ENCODE measurements at regions of chr10 and their contacts with region 1.

Region 1: GRCh38 chr10:123885406-123886170 is 6.0 kb downstream of the CPXM2 start:
- DNase-seq: peak in 1 of 2 donors; percentile 92
- H3K4me3 ChIP-seq: no peak overlapping the region
- H3K27ac ChIP-seq: peak overlapping the region; percentile 89 to 97
- H3K4me1 ChIP-seq: peaks cover 30 to 77% of the 10 kb centered on the region in 2 donors
- H3K27me3 ChIP-seq: no peaks in the 10 kb centered on the region
- CTCF ChIP-seq: no peak

Region 2: DNA sequence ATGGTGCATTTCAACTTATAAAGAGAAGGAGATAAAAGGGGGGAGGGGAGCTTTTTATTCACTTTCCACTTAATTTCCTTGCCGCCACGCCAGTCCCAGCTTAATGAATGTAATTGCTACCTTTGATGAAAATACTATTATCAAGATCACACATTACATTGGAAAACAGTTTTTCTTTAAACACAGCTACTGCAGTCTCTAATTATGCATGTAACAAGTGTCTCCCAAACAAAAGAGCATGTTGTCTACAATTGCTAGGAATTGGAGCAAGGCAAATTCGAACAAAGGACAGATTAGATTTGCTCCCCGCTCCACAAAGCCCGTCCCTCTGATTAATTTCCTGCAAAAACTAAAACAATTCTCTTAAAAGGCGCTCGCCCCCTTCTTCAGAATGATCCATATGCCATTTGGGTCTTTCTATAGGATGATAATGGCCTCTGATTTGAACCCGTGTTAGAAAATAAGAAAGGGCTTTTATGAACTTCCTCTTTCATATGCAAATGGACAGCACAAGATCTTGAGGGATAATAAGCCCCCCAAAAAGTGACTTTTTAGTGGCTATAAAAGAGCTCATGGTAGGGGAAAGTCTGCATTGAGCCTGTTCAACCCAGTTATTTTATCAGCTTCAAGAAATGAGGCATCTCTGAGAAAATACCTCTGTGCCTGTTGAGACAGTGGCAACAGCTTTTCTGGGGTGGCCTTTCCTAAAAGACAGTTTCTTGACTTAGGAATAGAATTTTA is 816.2 kb before region 1 on chr10:
- intact Hi-C with region 1: no loop called
- DNase-seq: no peak
- H3K4me3 ChIP-seq: no peak overlapping the region
- H3K27ac ChIP-seq: no peak overlapping the region
- H3K4me1 ChIP-seq: no peaks in the 10 kb centered on the region
- H3K27me3 ChIP-seq: no peaks in the 10 kb centered on the region
- CTCF ChIP-seq: no peak

Region 3: DNA sequence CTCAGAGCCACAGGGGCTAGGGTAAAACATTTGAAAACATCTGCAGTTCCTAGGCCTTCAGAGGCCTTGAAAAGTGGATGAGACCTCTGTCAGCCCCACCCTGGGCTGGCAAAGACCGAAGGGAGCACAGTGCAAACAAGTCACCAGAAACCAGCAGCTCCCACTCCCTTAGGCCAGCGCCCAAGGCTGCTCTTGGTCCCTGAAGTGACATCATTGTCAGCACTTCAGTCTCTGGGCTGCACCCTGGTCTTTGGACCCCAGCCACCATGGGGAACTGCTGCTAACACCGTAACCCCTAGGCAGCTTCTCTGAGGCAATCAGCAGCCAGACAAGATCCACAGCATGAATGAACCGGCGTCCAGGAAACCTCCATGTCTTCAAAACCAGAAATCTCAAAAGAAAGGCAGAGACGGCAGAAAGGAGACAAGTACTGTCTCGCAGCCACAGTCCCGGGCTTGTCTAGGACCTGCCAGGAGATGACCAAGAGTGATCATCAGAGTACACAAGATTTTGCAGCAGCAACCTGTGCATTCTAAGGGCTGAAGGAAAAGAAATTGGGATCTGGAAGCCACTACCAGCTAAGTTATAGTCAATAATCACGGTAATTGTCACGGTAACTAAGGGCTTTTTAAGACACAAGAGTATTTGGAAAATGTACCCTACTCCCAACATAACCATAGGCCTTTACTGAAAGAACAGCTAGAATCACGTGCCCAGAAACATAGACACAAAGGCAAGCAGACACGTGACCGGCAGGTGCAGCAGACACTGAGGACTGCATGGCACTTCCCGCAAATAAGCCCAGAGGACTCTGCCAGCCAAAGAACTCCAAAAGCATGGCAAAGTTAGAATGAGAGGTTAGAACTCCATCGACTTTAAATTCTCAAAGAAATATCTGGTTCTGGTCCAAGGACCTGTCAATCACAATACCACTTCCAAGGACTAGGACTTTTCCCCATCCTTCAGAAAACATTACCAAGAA is 17.3 kb before region 1 on chr10:
- intact Hi-C with region 1: loop called (anchors 1 kb)
- DNase-seq: peak in 1 of 2 donors; percentile 63
- H3K4me3 ChIP-seq: no peak overlapping the region
- H3K27ac ChIP-seq: peak overlapping the region; percentile 40 to 65
- H3K4me1 ChIP-seq: peaks cover 31 to 40% of the 10 kb centered on the region in 2 donors
- H3K27me3 ChIP-seq: no peaks in the 10 kb centered on the region
- CTCF ChIP-seq: no peak